Breast epithelium (tissue), 4 donors: ENCODE measurements at regions of chr1 and their contacts with region 1.

Region 1: DNA sequence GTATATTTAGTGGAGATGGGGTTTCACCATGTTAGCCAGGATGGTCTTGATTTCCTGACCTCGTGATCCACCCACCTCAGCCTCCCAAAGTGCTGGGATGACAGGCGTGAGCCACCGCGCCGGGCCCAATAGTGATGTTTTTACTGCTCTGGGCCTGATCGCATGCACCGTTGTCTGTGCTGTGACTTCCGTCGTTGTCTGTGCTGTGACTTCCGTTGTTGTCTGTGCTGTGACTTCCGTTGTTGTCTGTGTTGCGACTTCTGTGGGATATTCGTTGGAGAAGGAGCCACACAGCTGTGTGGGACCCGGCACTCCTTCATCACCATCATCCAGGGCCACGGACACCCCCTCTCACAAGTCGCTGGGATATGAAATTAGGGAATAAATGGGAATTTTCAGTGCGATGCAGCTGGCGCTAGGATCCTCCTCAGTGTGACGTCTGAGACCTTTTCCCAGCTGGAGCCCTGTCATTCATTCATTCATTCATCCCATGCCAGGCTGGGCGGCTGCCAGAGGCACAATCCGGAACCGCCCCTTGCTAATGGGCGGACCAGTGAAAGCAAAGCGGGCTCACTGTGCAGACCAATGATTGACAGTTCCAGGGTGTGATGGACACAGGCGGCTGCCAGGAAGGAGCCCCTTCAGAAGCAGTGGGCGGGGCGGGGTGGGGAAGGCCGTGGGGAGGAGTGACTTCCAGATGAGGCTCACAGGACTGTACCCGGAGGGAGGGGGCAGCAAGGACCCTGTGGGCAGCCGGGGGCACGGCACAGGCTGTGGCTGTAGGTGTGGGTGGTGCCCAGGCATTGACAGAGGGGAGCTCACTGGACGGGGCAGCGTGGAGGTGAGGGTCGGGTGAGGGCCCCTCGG is 48.9 kb downstream of the PRKCZ start:
- DNase-seq: no peak
- H3K4me3 ChIP-seq: no peak overlapping the region
- H3K27ac ChIP-seq: peak overlapping the region in 1 of 2 donors; percentile 19
- H3K4me1 ChIP-seq: no peaks in the 10 kb centered on the region
- H3K27me3 ChIP-seq: no peaks in the 10 kb centered on the region
- CTCF ChIP-seq: no peak
- POLR2A ChIP-seq: no peak

Region 2: DNA sequence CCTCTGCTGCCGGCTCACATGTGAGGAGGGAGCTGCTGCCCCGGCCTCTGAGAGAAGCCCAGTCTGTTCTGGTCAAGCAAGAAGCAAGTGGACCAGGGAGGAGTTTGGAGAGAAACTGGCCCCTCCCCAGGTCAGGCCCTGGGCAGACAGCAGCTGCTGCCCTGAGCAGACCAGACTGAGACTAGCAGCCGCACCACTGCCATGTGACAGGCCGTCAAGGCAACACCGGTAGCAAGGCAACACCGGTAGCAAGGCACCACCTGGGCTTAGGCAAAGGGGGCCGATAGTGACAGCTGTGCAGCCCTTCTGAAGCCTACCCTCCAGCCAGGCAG is 1405.7 kb after region 1 on chr1:
- intact Hi-C with region 1: loop called (anchors 5 kb)
- DNase-seq: no peak
- H3K4me3 ChIP-seq: no peak overlapping the region
- H3K27ac ChIP-seq: peak overlapping the region in 1 of 2 donors; percentile 69
- H3K4me1 ChIP-seq: no peaks in the 10 kb centered on the region
- H3K27me3 ChIP-seq: no peaks in the 10 kb centered on the region
- CTCF ChIP-seq: no peak
- POLR2A ChIP-seq: no peak